Prostate gland (tissue), 2 donors: ENCODE measurements at regions of chr6 and their contacts with region 1.

Region 1: GRCh38 chr6:16338577-16339262 is 100.3 kb downstream of the GMPR start:
- DNase-seq: peak; percentile 31
- H3K4me3 ChIP-seq: no peak overlapping the region
- H3K27ac ChIP-seq: no peak overlapping the region
- H3K4me1 ChIP-seq: no peaks in the 10 kb centered on the region
- H3K27me3 ChIP-seq: no peaks in the 10 kb centered on the region
- CTCF ChIP-seq: peak in 3 of 4 experiments; percentile 14 to 49 (median 28)
- POLR2A ChIP-seq: no peak

Region 2: GRCh38 chr6:16403831-16404230 is 65.1 kb after region 1 on chr6:
- intact Hi-C with region 1: loop called (anchors 5 kb)
- DNase-seq: no peak
- H3K4me3 ChIP-seq: no peak overlapping the region
- H3K27ac ChIP-seq: peak overlapping the region in 1 of 2 donors; percentile 62
- H3K4me1 ChIP-seq: peaks cover 14% of the 10 kb centered on the region
- H3K27me3 ChIP-seq: no peaks in the 10 kb centered on the region
- CTCF ChIP-seq: peak in 1 of 4 experiments; percentile 18
- POLR2A ChIP-seq: no peak